PC-9 (cell line): ENCODE measurements at regions of chr5 and their contacts with region 1.

Region 1: DNA sequence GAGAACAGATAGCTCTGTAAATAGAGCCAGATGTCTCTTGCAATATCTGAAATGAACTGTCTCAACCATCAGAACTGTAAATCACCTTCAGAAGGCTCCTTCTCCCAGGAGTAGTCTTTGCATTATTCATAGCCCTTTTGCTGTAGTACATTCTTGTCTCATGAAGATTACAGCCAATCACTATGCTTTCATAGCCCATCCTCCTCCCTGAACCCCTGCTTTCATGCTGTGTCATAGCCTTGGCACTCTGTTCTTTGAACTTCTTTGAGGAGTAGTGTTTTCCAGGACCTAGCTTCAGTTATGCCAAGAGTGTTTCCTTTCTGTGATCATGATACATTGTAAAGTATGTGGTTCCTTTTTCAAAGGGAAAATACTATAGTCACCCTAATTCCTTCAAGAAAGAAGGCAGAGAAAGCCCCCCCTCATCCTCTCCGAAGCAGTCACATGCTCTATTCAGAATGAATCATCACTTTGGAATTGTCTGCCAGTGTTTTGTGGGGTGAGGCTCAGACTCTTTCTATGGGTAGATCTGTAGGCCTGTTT is 61.1 kb downstream of the GRIA1 start:
- DNase-seq: peak in 1 of 2 experiments; percentile 51
- H3K4me3 ChIP-seq: no peak overlapping the region; the same call in 1 of the 2 replicates
- H3K27ac ChIP-seq: peak overlapping the region; percentile 48
- H3K4me1 ChIP-seq: peaks cover 14% of the 10 kb centered on the region
- H3K27me3 ChIP-seq: no peaks in the 10 kb centered on the region
- CTCF ChIP-seq: no peak

Region 2: GRCh38 chr5:153537207-153537606 is 14.4 kb before region 1 on chr5:
- CTCF ChIA-PET with region 1: no interaction called
- POLR2A ChIA-PET with region 1: no interaction called
- intact Hi-C with region 1: no loop called
- DNase-seq: no peak
- H3K4me3 ChIP-seq: no peak overlapping the region
- H3K27ac ChIP-seq: no peak overlapping the region
- H3K4me1 ChIP-seq: no peaks in the 10 kb centered on the region
- H3K27me3 ChIP-seq: 0 out of 2 replicates have a peak, but pooled peaks cover 3% of the 10 kb centered on the region
- CTCF ChIP-seq: no peak

Region 3: DNA sequence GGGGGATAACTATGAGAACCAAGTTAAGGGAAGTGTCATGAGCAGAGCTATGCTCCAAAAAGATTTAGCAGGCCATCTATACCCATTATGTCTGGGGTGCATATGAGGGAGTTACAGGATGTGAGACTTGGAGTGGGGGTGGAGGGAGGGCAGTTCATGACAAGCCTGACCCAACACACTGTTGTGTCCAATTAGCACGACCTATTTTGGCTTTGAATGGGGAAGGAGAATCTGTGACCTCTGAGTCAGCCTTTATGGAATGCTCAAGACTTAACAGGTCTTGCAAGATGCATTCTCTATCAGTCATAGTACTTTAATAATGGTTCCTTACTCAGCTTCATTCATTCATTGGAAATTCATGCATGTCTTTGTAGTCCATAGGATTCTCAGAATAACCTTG is 10.6 kb after region 1 on chr5:
- CTCF ChIA-PET with region 1: no interaction called
- POLR2A ChIA-PET with region 1: no interaction called
- intact Hi-C with region 1: loop called (anchors 1 kb)
- DNase-seq: peak; percentile 53 to 65
- H3K4me3 ChIP-seq: no peak overlapping the region
- H3K27ac ChIP-seq: 0 out of 2 replicates have a peak overlapping the region, but pooled peaks have one; percentile 23
- H3K4me1 ChIP-seq: peaks cover 11% of the 10 kb centered on the region
- H3K27me3 ChIP-seq: no peaks in the 10 kb centered on the region
- CTCF ChIP-seq: no peak